ENCODE measurements at regions of chr6 and their contacts with region 1.

Region 1: GRCh38 chr6:31079656-31080261 is 32.6 kb downstream of the C6orf15 start:
- DNase-seq: peak; percentile 89
- H3K4me3 Mint-ChIP-seq: no peak overlapping the region
- H3K27ac Mint-ChIP-seq: no peak overlapping the region
- H3K4me1 Mint-ChIP-seq: peaks cover 8% of the 10 kb centered on the region
- H3K27me3 Mint-ChIP-seq: no peaks in the 10 kb centered on the region
- CTCF ChIP-seq: peak; percentile 89

Region 2: DNA sequence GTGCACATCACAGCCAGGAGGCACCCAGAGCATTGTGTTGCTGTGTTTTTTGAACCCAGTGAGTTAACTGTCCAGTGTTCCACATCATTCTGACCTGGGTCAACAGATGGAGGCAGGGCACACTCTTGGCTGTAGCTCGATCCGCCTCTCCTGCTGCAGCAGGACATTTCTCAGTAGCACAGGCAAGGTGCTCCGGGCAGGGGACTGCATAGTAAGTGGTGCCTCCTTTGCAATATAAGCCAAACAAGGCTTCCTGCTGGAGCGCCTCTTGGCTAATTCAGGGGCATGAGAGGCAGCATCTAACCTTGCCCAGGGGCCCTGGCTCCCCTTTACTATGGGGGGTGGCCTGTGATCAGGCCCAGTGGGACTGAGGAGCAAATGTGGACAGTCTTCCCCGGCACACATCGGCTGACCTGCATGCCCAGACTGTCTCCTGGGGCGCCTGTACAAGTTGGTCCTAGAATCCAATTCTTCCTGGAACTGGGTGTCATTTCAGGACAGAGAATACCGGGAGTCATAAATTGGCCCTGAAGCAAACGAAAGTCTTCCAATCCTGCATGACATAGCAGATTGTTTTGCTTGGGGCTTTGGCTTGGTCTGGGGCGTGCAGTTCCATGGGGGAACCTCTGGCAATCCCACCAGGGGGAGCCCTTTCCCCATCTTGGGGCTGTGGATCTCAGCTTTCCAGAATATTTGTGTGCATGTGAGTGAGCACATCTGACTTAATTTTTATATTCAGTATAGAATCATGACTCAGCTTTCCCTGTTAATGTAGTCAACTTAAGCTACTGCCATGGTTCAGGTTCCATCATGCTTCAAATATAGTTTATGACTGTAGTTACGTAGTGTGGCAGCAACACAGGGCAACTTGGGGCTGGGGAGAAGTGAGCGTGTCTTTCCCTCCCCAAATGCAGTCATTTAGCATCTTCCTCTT is 251.5 kb before region 1 on chr6:
- CTCF ChIA-PET with region 1: interaction called, 16 read pairs
- intact Hi-C with region 1: loop called (anchors 5 kb)
- DNase-seq: peak; percentile 99
- H3K4me3 Mint-ChIP-seq: no peak overlapping the region
- H3K27ac Mint-ChIP-seq: peak overlapping the region; percentile 12
- H3K4me1 Mint-ChIP-seq: peaks cover 37% of the 10 kb centered on the region
- H3K27me3 Mint-ChIP-seq: no peaks in the 10 kb centered on the region
- CTCF ChIP-seq: peak; percentile 95

Region 3: GRCh38 chr6:30844091-30844535 is 235.6 kb before region 1 on chr6:
- CTCF ChIA-PET with region 1: no interaction called
- intact Hi-C with region 1: no loop called
- DNase-seq: no peak
- H3K4me3 Mint-ChIP-seq: no peak overlapping the region
- H3K27ac Mint-ChIP-seq: no peak overlapping the region
- H3K4me1 Mint-ChIP-seq: peaks cover 48% of the 10 kb centered on the region
- H3K27me3 Mint-ChIP-seq: no peaks in the 10 kb centered on the region
- CTCF ChIP-seq: peak; percentile 7

Region 4: DNA sequence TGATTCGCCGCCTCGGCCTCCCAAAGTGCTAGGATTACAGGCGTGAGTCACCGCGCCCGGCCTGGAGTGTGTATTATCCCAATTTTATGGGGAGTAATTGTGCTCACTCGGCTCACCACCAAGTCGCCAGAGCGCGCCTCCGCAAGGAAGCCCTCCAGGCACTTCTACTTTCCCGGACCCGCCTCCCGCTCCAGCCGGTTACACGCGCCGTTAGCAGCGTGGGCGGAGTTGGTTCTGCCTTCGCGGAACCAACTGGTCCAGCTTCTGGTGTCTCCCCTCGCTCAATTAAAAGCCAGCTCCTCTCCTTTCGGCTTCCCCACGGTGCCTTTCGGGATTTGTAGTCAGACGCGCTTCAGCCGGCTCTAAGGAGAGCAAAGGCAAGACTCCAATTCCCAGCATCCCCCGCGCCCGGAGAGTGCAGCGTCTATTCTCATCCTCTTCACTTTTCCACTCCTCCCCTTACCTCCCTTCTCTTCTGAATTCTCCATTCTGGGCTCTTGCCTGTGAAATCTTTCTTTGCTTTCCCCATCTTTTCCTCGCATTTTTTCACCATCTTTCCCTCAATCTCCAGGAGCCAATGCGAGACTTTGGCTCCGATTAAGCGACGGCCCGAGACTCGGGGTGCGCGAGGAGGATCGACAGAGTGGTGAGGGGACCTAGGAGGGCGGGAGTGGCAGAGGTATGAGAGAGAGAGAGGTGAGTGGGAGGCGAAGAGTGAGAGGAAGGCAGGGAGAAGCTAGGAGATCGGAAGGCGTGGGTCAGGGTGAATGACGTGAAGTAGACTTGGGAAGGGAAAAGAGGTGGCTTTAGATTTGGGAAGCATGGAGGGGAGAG is 171.8 kb before region 1 on chr6 and contains the start of gene GTF2H4:
- CTCF ChIA-PET with region 1: interaction called, 81 read pairs
- intact Hi-C with region 1: no loop called
- DNase-seq: peak; percentile 99
- H3K4me3 Mint-ChIP-seq: peak within 1 kb of the TSS; percentile 97
- H3K27ac Mint-ChIP-seq: peak within 1 kb of the TSS; percentile 76
- H3K4me1 Mint-ChIP-seq: peaks cover 18% of the 10 kb centered on the region
- H3K27me3 Mint-ChIP-seq: no peaks in the 10 kb centered on the region
- CTCF ChIP-seq: no peak
- total RNA-seq, gene GTF2H4: 70.5 and 80.0 TPM in 2 replicates

Region 5: DNA sequence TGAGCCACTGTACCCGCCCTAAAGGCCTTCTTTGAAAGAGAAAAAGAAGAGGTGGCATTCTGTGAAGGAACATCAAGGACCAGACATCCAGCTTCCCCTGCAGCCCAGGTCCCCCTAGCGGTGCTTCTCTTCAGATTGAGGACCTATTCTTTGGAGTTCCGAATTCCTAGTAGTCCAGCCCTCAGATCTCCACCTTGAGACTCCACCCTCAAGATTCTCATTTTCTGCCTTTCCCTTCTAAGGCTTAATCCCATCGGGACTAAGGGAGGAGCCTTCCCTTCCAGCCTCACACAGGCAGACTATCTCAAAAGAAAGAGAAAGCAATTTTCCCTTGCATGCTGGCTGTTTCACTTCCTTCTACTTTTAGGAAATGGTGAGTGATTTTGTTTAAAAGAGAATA is 37.0 kb before region 1 on chr6:
- CTCF ChIA-PET with region 1: interaction called, 10 read pairs
- intact Hi-C with region 1: no loop called
- DNase-seq: peak; percentile 82
- H3K4me3 Mint-ChIP-seq: no peak overlapping the region
- H3K27ac Mint-ChIP-seq: peak overlapping the region; percentile 14
- H3K4me1 Mint-ChIP-seq: peaks cover 31% of the 10 kb centered on the region
- H3K27me3 Mint-ChIP-seq: peaks cover 12% of the 10 kb centered on the region
- CTCF ChIP-seq: peak; percentile 85

Region 6: GRCh38 chr6:31114970-31115849 is 35.5 kb after region 1 on chr6:
- CTCF ChIA-PET with region 1: interaction called, 22 read pairs
- intact Hi-C with region 1: no loop called
- DNase-seq: peak; percentile 73
- H3K4me3 Mint-ChIP-seq: peak overlapping the region; percentile 58
- H3K27ac Mint-ChIP-seq: peak overlapping the region; percentile 87
- H3K4me1 Mint-ChIP-seq: peaks cover 44% of the 10 kb centered on the region
- H3K27me3 Mint-ChIP-seq: peaks cover 6% of the 10 kb centered on the region
- CTCF ChIP-seq: peak; percentile 47

Region 7: GRCh38 chr6:31152776-31153175 is 73.0 kb after region 1 on chr6:
- CTCF ChIA-PET with region 1: no interaction called
- intact Hi-C with region 1: no loop called
- DNase-seq: no peak
- H3K4me3 Mint-ChIP-seq: no peak overlapping the region
- H3K27ac Mint-ChIP-seq: no peak overlapping the region
- H3K4me1 Mint-ChIP-seq: peaks cover 15% of the 10 kb centered on the region
- H3K27me3 Mint-ChIP-seq: no peaks in the 10 kb centered on the region
- CTCF ChIP-seq: no peak

Region 8: DNA sequence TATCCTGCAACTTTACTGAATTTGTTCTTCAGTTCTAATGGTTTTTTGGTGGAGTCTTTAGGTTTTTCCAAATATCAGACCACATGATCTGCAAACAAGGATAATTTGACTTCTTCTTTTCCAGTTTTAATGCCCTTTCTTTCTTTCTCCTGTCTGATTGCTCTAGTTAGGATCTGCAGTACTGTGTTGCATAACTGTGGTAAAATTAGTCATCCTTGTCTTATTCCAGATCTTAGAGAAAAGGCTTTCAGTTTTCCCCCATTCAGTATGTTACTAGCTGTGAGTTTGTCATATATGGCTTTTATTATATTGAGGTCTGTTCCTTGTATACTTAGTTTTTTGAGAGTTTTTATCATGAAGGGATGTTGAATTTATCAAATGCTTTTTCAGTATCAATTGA is 327.9 kb after region 1 on chr6:
- CTCF ChIA-PET with region 1: no interaction called
- intact Hi-C with region 1: no loop called
- DNase-seq: no peak
- H3K4me3 Mint-ChIP-seq: peak overlapping the region; percentile 25
- H3K27ac Mint-ChIP-seq: peak overlapping the region; percentile 19
- H3K4me1 Mint-ChIP-seq: peaks cover 59% of the 10 kb centered on the region
- H3K27me3 Mint-ChIP-seq: no peaks in the 10 kb centered on the region
- CTCF ChIP-seq: no peak

Measured in Calu3 (cell line).